ENCODE measurements at regions of chr6 and their contacts with region 1.

Region 1: GRCh38 chr6:36027501-36028087 is at the start of gene MAPK14:
- DNase-seq: peak; percentile 99
- ATAC-seq: peak; percentile 88
- H3K4me3 Mint-ChIP-seq: peak within 1 kb of the TSS; percentile 98
- H3K27ac Mint-ChIP-seq: peak within 1 kb of the TSS; percentile 38
- H3K4me1 Mint-ChIP-seq: peaks cover 52% of the 10 kb centered on the region
- H3K27me3 Mint-ChIP-seq: peaks cover 9% of the 10 kb centered on the region; the same call in 1 of the 2 replicates
- CTCF ChIP-seq: no peak
- total RNA-seq, gene MAPK14: 30.8 to 34.7 TPM (median 34.0 TPM) in 3 replicates

Region 2: DNA sequence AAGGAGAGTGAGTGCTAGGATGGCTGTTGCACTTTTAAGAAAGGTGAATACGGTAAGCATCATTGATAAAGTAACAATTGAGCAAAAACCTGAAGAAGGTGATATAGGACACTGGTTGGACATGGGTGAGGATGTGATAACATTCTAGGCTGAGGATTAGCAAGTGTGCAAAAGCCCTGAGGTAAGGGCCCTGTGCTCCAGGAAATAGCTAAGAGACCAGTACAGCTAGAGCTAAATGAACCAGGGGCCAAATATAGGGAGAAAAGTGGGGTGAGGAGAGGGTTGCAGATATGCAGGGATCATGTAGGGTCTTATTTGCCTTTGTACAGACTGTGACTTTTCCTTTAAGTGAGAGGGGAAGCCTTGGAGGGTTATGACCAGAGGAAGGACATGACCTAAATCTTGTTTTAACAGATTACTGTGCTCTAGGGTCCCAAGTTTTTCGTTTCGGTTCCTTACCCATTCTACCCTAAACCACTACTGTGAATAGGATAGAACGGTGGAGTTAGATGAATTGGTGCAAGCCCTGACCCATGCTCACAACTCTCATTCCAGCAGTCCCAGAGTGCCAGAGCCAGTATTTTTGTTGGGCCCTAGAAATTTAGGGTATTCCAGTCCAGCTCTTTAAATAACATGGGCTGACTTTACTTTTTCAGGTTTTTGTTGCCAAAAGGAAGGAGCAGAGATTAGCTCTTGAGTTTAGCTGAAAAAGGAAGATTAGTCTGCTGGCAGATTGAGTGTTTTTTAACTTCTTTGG is 10.7 kb after region 1 on chr6:
- CTCF ChIA-PET with region 1: interaction called, 18 read pairs
- POLR2A ChIA-PET with region 1: interaction called, 4 read pairs
- DNase-seq: no peak
- ATAC-seq: no peak; the same call in 1 of the 2 replicates
- H3K4me3 Mint-ChIP-seq: no peak overlapping the region
- H3K27ac Mint-ChIP-seq: 0 out of 2 replicates have a peak overlapping the region, but pooled peaks have one; percentile 1
- H3K4me1 Mint-ChIP-seq: peaks cover 36% of the 10 kb centered on the region
- H3K27me3 Mint-ChIP-seq: no peaks in the 10 kb centered on the region
- CTCF ChIP-seq: no peak

Region 3: GRCh38 chr6:36094753-36095496 is 67.3 kb after region 1 on chr6:
- CTCF ChIA-PET with region 1: interaction called, 37 read pairs
- POLR2A ChIA-PET with region 1: interaction called, 12 read pairs
- DNase-seq: peak; percentile 77
- ATAC-seq: peak; percentile 92
- H3K4me3 Mint-ChIP-seq: no peak overlapping the region
- H3K27ac Mint-ChIP-seq: no peak overlapping the region
- H3K4me1 Mint-ChIP-seq: peaks cover 11% of the 10 kb centered on the region
- H3K27me3 Mint-ChIP-seq: no peaks in the 10 kb centered on the region
- CTCF ChIP-seq: peak; percentile 93

Measured in WTC11 (cell line).